HepG2 (cell line): ENCODE measurements at regions of chr3 and their contacts with region 1.

Region 1: GRCh38 chr3:79329154-79329553 is 438.6 kb downstream of the ROBO1 start:
- DNase-seq: no peak
- ATAC-seq: no peak
- H3K4me3 ChIP-seq: no peak overlapping the region
- H3K27ac ChIP-seq: no peak overlapping the region
- H3K4me1 ChIP-seq: no peaks in the 10 kb centered on the region
- H3K27me3 ChIP-seq: no peaks in the 10 kb centered on the region
- CTCF ChIP-seq: no peak
- EP300 ChIP-seq: no peak
- POLR2A ChIP-seq: no peak
- RAD21 ChIP-seq: no peak

Region 2: GRCh38 chr3:79263423-79263822 is 65.7 kb before region 1 on chr3:
- CTCF ChIA-PET with region 1: no interaction called
- POLR2A ChIA-PET with region 1: no interaction called
- in situ Hi-C with region 1: no loop called
- intact Hi-C with region 1: loop called (anchors 2 kb)
- DNase-seq: no peak
- ATAC-seq: no peak
- H3K4me3 ChIP-seq: no peak overlapping the region
- H3K27ac ChIP-seq: no peak overlapping the region
- H3K4me1 ChIP-seq: no peaks in the 10 kb centered on the region
- H3K27me3 ChIP-seq: no peaks in the 10 kb centered on the region
- CTCF ChIP-seq: no peak
- EP300 ChIP-seq: no peak
- POLR2A ChIP-seq: no peak
- RAD21 ChIP-seq: no peak